Mammary epithelial cell (primary cell): ENCODE measurements at regions of chr7 and their contacts with region 1.

Region 1: GRCh38 chr7:100896732-100897608 is 1.3 kb upstream of the ACHE start:
- DNase-seq: no peak
- H3K4me3 ChIP-seq: no peak overlapping the region
- H3K27ac ChIP-seq: no peak overlapping the region
- H3K4me1 ChIP-seq: peaks cover 9% of the 10 kb centered on the region
- H3K27me3 ChIP-seq: peaks cover 15% of the 10 kb centered on the region
- CTCF ChIP-seq: peak; percentile 44 to 75

Region 2: GRCh38 chr7:100933735-100934134 is 36.8 kb after region 1 on chr7:
- CTCF ChIA-PET with region 1: no interaction called
- dilution Hi-C with region 1: no loop called
- in situ Hi-C with region 1: no loop called
- intact Hi-C with region 1: no loop called
- DNase-seq: no peak
- H3K4me3 ChIP-seq: no peak overlapping the region
- H3K27ac ChIP-seq: no peak overlapping the region
- H3K4me1 ChIP-seq: peaks cover 13% of the 10 kb centered on the region
- H3K27me3 ChIP-seq: no peaks in the 10 kb centered on the region
- CTCF ChIP-seq: no peak

Region 3: DNA sequence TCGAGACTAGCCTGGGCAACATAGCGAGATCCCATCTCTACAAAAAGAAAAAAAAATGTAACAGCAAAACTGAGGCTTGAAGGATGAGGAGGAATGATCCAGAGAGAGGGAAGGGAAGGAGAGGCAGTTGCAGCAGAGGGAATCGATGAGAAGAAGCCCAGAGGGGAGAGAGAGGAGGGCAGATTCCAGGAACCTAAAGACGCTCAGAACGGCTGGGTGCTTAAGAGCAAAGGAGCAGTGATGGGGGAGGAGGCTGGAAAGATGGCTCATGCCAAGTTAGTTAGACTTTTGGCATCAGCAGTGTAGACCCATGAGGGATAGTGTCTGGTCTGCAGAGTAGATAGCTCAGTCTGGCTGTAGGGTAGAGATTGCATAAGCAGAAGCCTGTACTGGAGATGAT is 112.7 kb after region 1 on chr7:
- CTCF ChIA-PET with region 1: no interaction called
- dilution Hi-C with region 1: loop called (anchors 10 kb)
- in situ Hi-C with region 1: no loop called
- intact Hi-C with region 1: no loop called
- DNase-seq: no peak
- H3K4me3 ChIP-seq: no peak overlapping the region
- H3K27ac ChIP-seq: no peak overlapping the region
- H3K4me1 ChIP-seq: no peaks in the 10 kb centered on the region
- H3K27me3 ChIP-seq: no peaks in the 10 kb centered on the region
- CTCF ChIP-seq: no peak

Region 4: DNA sequence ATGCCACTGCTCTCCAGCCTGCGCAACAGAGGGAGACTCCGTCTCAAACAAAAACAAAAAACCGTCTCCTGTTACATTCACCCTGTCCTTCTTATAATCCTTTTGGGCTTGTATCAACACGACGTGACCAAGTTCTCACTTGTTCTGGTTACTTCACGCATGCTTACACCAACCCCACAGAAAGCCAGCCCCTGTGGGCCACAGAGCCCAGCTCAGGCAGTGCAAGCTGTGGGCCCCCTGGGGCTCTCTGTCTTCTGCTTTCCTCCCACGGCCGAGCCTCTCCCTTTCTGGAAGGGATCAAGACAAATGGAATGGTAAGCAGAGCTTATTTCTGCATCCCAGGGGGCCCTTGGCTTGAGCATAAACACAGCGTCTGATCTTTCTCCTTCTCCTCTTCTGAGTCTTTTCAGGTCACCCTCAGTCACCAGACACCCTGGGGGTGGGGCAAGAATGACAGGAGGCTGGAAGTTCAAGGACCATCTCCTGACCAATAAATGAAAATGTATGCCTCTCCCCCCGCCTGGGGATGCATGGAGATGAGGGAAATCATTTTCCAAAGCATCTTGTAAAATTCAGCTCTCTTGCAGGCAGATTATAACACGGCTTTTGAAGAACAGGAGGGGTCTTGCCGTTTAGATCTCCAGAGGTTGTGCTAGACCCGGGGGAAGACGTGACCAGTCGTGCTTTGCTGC is 169.3 kb after region 1 on chr7:
- CTCF ChIA-PET with region 1: no interaction called
- dilution Hi-C with region 1: no loop called
- in situ Hi-C with region 1: loop called in 1 of 2 experiments (anchors 5 kb)
- intact Hi-C with region 1: no loop called
- DNase-seq: peak; percentile 75
- H3K4me3 ChIP-seq: no peak overlapping the region
- H3K27ac ChIP-seq: no peak overlapping the region
- H3K4me1 ChIP-seq: peaks cover 4% of the 10 kb centered on the region
- H3K27me3 ChIP-seq: peaks cover 3% of the 10 kb centered on the region
- CTCF ChIP-seq: no peak

Region 5: GRCh38 chr7:101273206-101273605 is 376.2 kb after region 1 on chr7:
- CTCF ChIA-PET with region 1: no interaction called
- dilution Hi-C with region 1: loop called (anchors 10 kb)
- in situ Hi-C with region 1: loop called (anchors 10 to 25 kb)
- intact Hi-C with region 1: no loop called
- DNase-seq: no peak
- H3K4me3 ChIP-seq: no peak overlapping the region
- H3K27ac ChIP-seq: no peak overlapping the region
- H3K4me1 ChIP-seq: no peaks in the 10 kb centered on the region
- H3K27me3 ChIP-seq: no peaks in the 10 kb centered on the region
- CTCF ChIP-seq: no peak